ENCODE measurements at regions of chr1 and their contacts with region 1.

Region 1: DNA sequence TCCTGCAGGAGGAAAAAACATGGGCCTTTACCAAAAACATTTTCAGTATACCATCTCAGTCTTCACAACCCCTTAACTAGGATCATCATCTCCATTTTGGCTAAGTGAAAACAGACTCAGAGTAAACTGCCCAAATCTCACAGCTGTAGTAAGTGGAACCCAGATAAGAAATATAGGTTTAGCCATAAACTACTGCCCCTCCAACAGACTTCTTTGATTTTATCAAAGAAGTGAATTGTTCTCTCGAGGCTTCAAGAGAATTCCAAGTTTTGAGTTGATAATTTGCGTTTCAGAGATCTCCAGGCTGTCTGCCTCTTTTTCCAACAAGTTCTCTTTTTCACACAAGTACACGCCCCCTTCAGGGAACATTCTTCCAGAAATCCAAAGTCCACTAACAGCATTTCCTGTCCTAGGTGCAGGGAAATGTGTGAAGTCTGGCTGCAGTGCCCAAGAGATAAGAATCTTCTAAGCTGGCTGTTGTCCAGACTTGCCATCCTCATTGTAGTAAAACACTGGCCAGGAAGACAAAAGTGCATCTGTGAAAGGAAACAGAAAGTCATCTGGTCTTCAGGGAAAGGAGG is 30.8 kb downstream of the RNF19B start:
- DNase-seq: peak; percentile 47
- H3K4me3 Mint-ChIP-seq: peak overlapping the region; percentile 2
- H3K27ac Mint-ChIP-seq: no peak overlapping the region
- H3K4me1 Mint-ChIP-seq: peaks cover 10% of the 10 kb centered on the region
- H3K27me3 Mint-ChIP-seq: no peaks in the 10 kb centered on the region
- CTCF ChIP-seq: no peak

Region 2: DNA sequence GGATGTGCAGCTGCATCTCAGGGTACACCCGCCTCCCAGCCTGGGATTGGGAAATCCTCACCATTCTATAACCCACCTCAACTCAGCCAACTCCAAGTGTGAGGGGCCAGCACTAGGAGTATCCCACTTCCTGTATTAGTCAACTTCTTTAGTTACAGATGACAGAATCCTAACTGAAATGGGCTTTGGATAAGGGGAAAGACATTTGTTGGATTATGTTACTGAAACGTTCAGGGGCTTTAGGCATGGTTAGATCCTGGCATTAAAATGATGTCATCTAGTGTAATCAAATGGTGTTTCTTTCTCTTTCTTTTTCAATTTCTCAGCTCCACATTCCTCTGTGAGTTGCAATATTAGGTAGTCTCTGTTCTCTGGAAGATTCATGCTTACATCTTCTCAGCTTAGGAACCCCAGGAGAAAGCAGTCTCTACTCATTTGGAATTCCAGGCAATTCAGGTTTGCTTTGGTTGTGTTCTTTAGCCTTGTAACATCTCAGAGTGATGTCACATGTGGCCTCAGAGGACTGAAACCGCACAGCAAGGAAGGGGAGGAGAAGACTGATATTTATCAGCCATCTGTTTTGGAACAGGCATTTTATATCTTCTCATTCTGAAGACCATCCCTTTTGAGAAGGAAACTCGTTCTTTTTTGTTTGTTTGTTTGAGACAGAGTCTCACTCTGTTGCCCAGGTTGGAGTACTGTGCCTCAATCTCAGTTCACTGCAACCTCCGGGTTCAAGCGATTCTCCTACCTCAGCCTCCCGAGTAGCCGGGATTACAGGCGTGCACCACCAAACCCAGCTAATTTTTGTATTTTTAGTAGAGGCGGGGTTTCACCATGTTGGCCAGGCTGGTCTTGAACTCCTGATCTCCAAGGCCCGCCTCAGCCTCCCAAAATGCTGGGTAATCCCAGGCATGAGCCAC is 13.8 kb before region 1 on chr1:
- CTCF ChIA-PET with region 1: interaction called, 10 read pairs
- POLR2A ChIA-PET with region 1: interaction called, 3 read pairs
- intact Hi-C with region 1: no loop called
- DNase-seq: no peak
- H3K4me3 Mint-ChIP-seq: no peak overlapping the region
- H3K27ac Mint-ChIP-seq: no peak overlapping the region
- H3K4me1 Mint-ChIP-seq: peaks cover 6% of the 10 kb centered on the region
- H3K27me3 Mint-ChIP-seq: no peaks in the 10 kb centered on the region
- CTCF ChIP-seq: no peak

Region 3: DNA sequence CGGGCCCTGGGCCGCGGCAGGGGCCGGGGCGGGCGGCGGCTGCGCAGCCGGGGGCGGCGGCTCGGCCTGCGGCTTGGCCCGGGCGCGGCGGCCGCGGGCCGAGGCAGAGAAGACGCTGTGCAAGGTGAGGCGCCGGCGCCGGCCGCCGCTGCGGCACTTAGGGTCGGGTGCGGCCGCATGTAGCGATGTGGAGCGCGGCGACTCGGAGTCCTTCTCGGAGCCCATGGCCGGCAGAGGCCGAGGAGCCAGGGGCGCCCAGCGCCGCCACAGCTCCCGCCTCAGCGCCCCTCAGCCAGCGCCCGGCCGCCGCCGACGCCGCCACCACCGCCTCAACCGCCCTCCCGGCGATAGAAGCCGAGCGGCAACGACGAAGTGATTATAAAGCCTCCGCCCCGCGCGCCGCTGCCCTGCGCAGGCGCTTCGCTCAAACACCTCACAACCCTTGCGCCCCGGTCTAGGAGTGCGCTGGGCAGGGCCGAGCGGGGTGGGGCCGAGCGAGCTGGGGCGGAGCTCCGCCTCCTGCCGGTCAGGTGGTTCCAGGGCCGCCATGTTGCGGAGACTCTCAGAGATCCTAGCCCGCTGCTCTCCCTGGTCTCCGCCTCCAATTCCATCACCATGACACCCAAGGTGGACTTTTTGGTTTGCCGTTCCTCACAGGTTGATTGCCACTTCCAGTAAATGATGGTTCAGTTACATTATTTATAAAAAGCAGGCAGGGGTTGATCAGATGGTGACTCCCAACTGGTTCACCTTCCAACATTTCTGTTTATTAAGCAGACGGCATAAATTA is 30.8 kb after region 1 on chr1 and contains the start of gene RNF19B:
- CTCF ChIA-PET with region 1: interaction called, 14 read pairs
- POLR2A ChIA-PET with region 1: interaction called, 6 read pairs
- intact Hi-C with region 1: loop called (anchors 1 kb)
- DNase-seq: peak; percentile 95
- H3K4me3 Mint-ChIP-seq: peak within 1 kb of the TSS; percentile 84
- H3K27ac Mint-ChIP-seq: peak within 1 kb of the TSS; percentile 69
- H3K4me1 Mint-ChIP-seq: peaks cover 29% of the 10 kb centered on the region
- H3K27me3 Mint-ChIP-seq: no peaks in the 10 kb centered on the region
- CTCF ChIP-seq: no peak
- total RNA-seq, gene RNF19B: 38.0 and 41.3 TPM in 2 replicates

Region 4: GRCh38 chr1:33055210-33056008 is 121.6 kb after region 1 on chr1:
- CTCF ChIA-PET with region 1: interaction called, 35 read pairs
- POLR2A ChIA-PET with region 1: interaction called, 5 read pairs
- intact Hi-C with region 1: loop called (anchors 2 kb)
- DNase-seq: peak; percentile 88
- H3K4me3 Mint-ChIP-seq: no peak overlapping the region
- H3K27ac Mint-ChIP-seq: peak overlapping the region; percentile 36
- H3K4me1 Mint-ChIP-seq: peaks cover 17% of the 10 kb centered on the region
- H3K27me3 Mint-ChIP-seq: no peaks in the 10 kb centered on the region
- CTCF ChIP-seq: peak; percentile 57

Region 5: DNA sequence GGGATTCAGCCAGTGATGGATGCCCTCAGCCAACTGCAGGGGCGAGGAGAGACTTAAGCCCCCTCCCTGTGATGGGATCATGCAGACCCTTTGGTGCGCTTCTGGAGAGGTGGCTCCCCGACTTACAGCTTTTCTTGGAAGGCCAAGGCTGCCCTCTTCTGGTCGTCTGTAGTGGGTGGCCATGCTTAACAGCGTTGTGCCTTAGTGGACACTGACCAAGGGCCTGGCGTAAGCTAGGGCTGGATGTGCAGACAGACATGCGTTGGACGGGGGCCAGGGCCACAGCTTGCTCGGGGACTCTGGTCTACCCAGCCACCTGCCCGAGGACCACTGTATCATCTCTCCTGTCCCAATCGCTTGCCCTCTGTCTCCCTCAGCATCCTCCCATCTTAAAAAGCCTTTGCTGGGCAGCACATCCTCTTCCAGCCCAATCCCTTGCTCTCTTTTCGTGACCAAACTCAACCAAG is 152.6 kb after region 1 on chr1:
- CTCF ChIA-PET with region 1: interaction called, 58 read pairs
- POLR2A ChIA-PET with region 1: interaction called, 6 read pairs
- intact Hi-C with region 1: loop called (anchors 1 kb)
- DNase-seq: peak; percentile 80
- H3K4me3 Mint-ChIP-seq: no peak overlapping the region
- H3K27ac Mint-ChIP-seq: no peak overlapping the region
- H3K4me1 Mint-ChIP-seq: peaks cover 14% of the 10 kb centered on the region
- H3K27me3 Mint-ChIP-seq: no peaks in the 10 kb centered on the region
- CTCF ChIP-seq: peak; percentile 84

Region 6: GRCh38 chr1:33137800-33138199 is 204.0 kb after region 1 on chr1:
- CTCF ChIA-PET with region 1: no interaction called
- POLR2A ChIA-PET with region 1: no interaction called
- intact Hi-C with region 1: no loop called
- DNase-seq: no peak
- H3K4me3 Mint-ChIP-seq: no peak overlapping the region
- H3K27ac Mint-ChIP-seq: no peak overlapping the region
- H3K4me1 Mint-ChIP-seq: no peaks in the 10 kb centered on the region
- H3K27me3 Mint-ChIP-seq: peaks cover 12% of the 10 kb centered on the region
- CTCF ChIP-seq: peak; percentile 12

Measured in MCF 10A (cell line).